Caco-2 (cell line): ENCODE measurements at regions of chr2 and their contacts with region 1.

Region 1: DNA sequence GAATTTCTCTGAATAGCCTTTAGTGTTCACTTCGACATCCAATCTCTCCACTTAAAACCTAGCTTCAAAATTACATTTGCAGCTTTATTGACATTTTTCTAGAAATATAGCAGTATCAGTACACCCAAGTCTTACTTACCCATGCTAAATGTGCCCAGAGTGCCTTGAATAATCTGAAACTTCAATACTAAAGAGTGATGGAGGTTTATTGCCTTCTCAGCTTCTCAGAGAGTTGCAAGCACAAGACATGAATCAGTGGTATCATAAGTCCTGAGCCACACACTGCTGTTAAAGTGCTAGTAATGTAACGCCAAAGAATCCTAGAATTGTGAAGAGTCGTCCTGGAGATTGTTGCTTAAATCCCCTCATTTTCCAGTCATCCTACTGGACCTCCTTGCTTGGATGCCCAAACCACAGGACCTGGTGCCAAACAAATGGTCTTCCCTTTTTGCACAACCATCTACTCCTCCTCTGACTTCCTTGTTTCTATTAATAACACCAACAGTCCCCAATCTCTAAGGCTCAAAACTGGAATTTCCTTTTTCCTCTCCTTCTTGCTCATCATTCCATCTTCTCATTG is 83.2 kb upstream of the SPATS2L start:
- DNase-seq: no peak
- H3K4me3 ChIP-seq: no peak overlapping the region
- H3K4me3 Mint-ChIP-seq: no peak overlapping the region
- H3K27ac Mint-ChIP-seq: peak overlapping the region; percentile 17
- H3K4me1 ChIP-seq: peaks cover 50% of the 10 kb centered on the region
- H3K4me1 Mint-ChIP-seq: peaks cover 49% of the 10 kb centered on the region
- H3K27me3 ChIP-seq: no peaks in the 10 kb centered on the region
- H3K27me3 Mint-ChIP-seq: no peaks in the 10 kb centered on the region
- CTCF ChIP-seq: no peak

Region 2: DNA sequence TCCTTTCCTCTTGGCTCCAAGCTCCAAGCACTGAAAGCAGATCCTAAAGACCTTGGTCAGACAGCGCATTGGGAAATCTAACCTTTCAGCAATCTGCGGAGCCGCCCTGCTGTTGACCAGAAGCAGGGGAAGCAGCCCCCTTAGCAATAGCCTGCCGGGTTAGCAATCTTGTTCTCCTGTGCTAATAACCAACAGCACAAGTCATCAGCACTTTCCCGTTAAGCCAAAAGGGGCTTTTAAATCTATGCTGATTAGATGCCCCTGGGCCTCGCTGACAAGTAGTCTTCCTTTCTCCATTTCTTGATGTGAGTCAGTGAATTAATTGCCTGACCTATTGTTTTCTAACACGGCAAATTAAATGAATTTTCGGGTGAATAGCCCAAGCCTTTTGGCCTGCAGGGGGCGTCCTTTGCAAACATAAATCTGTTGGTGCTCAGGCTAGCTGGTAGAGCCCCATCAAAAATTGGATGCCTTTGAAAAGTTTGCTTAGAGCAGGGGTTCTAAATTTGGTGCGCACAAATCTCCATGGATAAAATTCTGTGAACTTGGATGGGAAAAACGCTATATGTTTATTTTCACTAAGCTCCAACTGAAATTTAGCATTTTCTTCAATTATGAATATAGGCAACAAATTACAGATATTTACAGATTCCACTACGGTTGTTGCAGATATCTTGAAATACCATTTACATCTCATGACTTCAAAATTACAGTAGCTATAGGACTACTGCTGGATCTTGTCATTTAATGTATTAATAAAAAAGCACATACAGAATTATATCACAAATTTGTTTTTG is 243.3 kb before region 1 on chr2:
- CTCF ChIA-PET with region 1: no interaction called
- POLR2A ChIA-PET with region 1: no interaction called
- intact Hi-C with region 1: loop called (anchors 2 kb)
- DNase-seq: peak; percentile 76 to 83
- H3K4me3 ChIP-seq: no peak overlapping the region
- H3K4me3 Mint-ChIP-seq: peak overlapping the region; percentile 9
- H3K27ac Mint-ChIP-seq: no peak overlapping the region
- H3K4me1 ChIP-seq: peaks cover 20% of the 10 kb centered on the region
- H3K4me1 Mint-ChIP-seq: peaks cover 20% of the 10 kb centered on the region
- H3K27me3 ChIP-seq: no peaks in the 10 kb centered on the region
- H3K27me3 Mint-ChIP-seq: no peaks in the 10 kb centered on the region
- CTCF ChIP-seq: peak; percentile 74 to 87

Region 3: GRCh38 chr2:200148366-200148765 is 74.9 kb before region 1 on chr2:
- CTCF ChIA-PET with region 1: no interaction called
- POLR2A ChIA-PET with region 1: no interaction called
- intact Hi-C with region 1: no loop called
- DNase-seq: no peak
- H3K4me3 ChIP-seq: no peak overlapping the region
- H3K4me3 Mint-ChIP-seq: no peak overlapping the region
- H3K27ac Mint-ChIP-seq: no peak overlapping the region
- H3K4me1 ChIP-seq: peaks cover 14% of the 10 kb centered on the region
- H3K4me1 Mint-ChIP-seq: peaks cover 7% of the 10 kb centered on the region
- H3K27me3 ChIP-seq: no peaks in the 10 kb centered on the region
- H3K27me3 Mint-ChIP-seq: no peaks in the 10 kb centered on the region
- CTCF ChIP-seq: no peak

Region 4: DNA sequence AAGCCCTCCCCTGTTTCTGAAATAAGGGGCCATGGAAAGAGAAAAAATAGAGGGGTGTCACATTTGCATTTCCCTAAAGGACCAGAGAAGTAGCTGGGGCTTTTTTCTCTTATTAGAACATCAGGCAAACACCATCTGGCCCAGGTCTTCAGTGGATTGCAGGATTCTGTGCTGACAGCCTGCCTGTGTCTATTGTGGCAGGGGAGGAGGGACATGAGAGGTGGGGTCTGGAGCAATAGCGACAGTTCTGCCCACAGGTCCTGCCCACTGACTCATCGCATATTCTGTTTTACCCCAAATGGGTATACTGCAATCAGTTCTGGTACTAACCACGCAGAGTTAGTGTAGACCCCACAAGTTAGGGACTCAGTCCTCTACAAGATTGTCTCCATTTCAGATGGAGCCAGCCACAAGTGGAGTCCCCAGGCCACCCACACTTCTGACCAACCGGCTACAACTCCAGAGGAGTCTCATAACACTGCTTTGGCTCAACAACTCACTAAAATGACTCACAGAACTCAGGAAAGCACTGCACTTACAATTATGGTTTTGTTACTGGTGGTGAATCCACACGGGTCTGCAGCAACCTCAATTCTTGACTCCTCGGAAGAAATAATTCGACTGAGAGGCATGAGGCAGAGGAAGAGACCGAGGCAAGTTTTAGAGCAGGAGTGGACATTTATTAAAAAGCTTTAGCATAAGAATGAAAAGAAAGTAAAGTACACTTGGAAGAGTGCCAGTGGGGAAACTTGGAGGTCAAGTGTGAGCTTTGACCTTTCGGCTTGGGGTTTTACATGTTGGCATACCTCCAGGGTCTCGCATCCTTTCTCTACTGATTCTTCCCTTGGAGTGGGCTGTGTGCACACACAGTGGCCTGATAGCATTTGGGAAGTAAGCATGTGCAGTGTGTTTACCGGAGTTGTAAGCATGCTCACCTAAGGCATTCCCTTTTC is 63.2 kb before region 1 on chr2:
- CTCF ChIA-PET with region 1: interaction called, 3 read pairs
- POLR2A ChIA-PET with region 1: no interaction called
- intact Hi-C with region 1: loop called (anchors 1 kb)
- DNase-seq: no peak
- H3K4me3 ChIP-seq: no peak overlapping the region
- H3K4me3 Mint-ChIP-seq: no peak overlapping the region
- H3K27ac Mint-ChIP-seq: no peak overlapping the region
- H3K4me1 ChIP-seq: peaks cover 24% of the 10 kb centered on the region; the same call in 1 of the 2 replicates
- H3K4me1 Mint-ChIP-seq: peaks cover 20% of the 10 kb centered on the region
- H3K27me3 ChIP-seq: no peaks in the 10 kb centered on the region
- H3K27me3 Mint-ChIP-seq: no peaks in the 10 kb centered on the region
- CTCF ChIP-seq: no peak

Region 5: GRCh38 chr2:200239216-200239615 is 15.9 kb after region 1 on chr2:
- CTCF ChIA-PET with region 1: no interaction called
- POLR2A ChIA-PET with region 1: no interaction called
- intact Hi-C with region 1: no loop called
- DNase-seq: no peak
- H3K4me3 ChIP-seq: no peak overlapping the region
- H3K4me3 Mint-ChIP-seq: no peak overlapping the region
- H3K27ac Mint-ChIP-seq: no peak overlapping the region
- H3K4me1 ChIP-seq: no peaks in the 10 kb centered on the region
- H3K4me1 Mint-ChIP-seq: no peaks in the 10 kb centered on the region
- H3K27me3 ChIP-seq: no peaks in the 10 kb centered on the region
- H3K27me3 Mint-ChIP-seq: no peaks in the 10 kb centered on the region
- CTCF ChIP-seq: no peak

Region 6: DNA sequence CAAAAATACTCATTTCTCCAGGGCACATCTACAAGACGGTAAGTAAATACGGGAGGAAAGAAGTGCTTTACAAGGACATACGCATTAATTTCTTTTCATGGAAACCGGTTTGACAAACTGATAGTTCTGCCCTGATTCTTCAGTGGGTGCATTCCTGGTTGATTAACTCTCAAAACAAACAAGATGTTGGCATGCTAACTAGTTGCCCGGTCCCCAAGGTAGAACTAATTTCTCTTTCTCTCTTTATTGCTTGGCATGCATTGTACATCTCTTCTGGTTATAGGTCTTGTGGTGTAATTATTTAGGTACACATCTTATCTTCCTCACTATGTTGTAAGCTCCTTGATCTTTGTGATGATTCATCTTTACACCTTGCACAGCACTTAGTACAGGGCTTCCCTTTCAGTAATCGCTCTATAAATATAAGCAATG is 36.3 kb after region 1 on chr2:
- CTCF ChIA-PET with region 1: no interaction called
- POLR2A ChIA-PET with region 1: no interaction called
- intact Hi-C with region 1: loop called (anchors 1 kb)
- DNase-seq: peak in 1 of 2 experiments; percentile 67
- H3K4me3 ChIP-seq: no peak overlapping the region
- H3K4me3 Mint-ChIP-seq: peak overlapping the region; percentile 49
- H3K27ac Mint-ChIP-seq: peak overlapping the region; percentile 17
- H3K4me1 ChIP-seq: peaks cover 39% of the 10 kb centered on the region
- H3K4me1 Mint-ChIP-seq: peaks cover 24% of the 10 kb centered on the region
- H3K27me3 ChIP-seq: no peaks in the 10 kb centered on the region
- H3K27me3 Mint-ChIP-seq: no peaks in the 10 kb centered on the region
- CTCF ChIP-seq: no peak

Region 7: GRCh38 chr2:200306196-200306930 is 83.1 kb after region 1 on chr2 and contains the start of gene SPATS2L:
- CTCF ChIA-PET with region 1: no interaction called
- POLR2A ChIA-PET with region 1: interaction called, 10 read pairs
- intact Hi-C with region 1: loop called (anchors 1 kb)
- DNase-seq: peak; percentile 90 to 94
- H3K4me3 ChIP-seq: peak within 1 kb of the TSS; percentile 88
- H3K4me3 Mint-ChIP-seq: peak within 1 kb of the TSS; percentile 89
- H3K27ac Mint-ChIP-seq: peak within 1 kb of the TSS; percentile 97
- H3K4me1 ChIP-seq: peaks cover 69% of the 10 kb centered on the region
- H3K4me1 Mint-ChIP-seq: peaks cover 40% of the 10 kb centered on the region
- H3K27me3 ChIP-seq: no peaks in the 10 kb centered on the region
- H3K27me3 Mint-ChIP-seq: no peaks in the 10 kb centered on the region
- CTCF ChIP-seq: no peak
- total RNA-seq, gene SPATS2L: 189 and 196 TPM in 2 replicates

Region 8: DNA sequence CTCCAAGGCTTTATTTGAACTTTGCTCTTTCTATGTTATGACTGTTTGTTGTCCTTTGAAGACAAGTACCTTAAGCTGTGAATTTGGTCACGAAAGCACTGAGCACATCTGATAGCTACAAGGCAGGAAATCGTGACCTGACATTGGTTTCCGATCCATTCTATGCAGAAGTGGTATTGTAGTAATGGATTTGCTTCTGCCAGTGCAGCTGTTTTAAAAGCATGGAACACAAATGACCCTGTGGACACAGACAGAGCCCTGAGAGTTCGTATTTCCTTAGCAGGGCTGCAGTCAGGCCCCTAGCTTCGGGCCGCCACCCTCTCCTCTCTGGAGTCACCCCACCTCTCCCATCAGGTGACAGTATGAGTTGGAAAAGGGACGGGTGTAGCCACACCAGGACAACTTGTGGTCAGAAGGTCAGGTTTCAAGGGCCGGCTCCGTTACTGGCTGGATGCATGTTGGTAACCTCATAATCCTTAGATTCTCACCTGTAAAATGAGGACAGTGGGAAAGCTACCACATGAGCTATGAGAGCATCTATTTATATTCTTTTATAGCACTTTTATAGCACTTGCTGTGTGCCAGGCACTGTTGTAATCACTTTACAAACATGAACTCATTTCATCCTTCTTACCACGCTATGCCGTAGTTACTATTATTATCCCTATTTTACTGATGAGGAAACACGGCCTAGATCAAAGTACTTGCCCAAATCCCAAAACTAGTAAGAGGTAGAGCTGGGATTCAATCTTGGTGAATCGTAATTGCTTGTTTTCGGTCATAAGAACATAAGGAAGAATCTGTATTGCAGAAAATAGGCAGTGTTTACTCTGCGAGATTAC is 153.4 kb after region 1 on chr2:
- CTCF ChIA-PET with region 1: no interaction called
- POLR2A ChIA-PET with region 1: no interaction called
- intact Hi-C with region 1: loop called (anchors 1 kb)
- DNase-seq: peak in 1 of 2 experiments; percentile 57
- H3K4me3 ChIP-seq: no peak overlapping the region
- H3K4me3 Mint-ChIP-seq: peak overlapping the region; percentile 65
- H3K27ac Mint-ChIP-seq: peak overlapping the region; percentile 90
- H3K4me1 ChIP-seq: peaks cover 91% of the 10 kb centered on the region
- H3K4me1 Mint-ChIP-seq: peaks cover 74% of the 10 kb centered on the region
- H3K27me3 ChIP-seq: no peaks in the 10 kb centered on the region
- H3K27me3 Mint-ChIP-seq: no peaks in the 10 kb centered on the region
- CTCF ChIP-seq: no peak

Region 9: DNA sequence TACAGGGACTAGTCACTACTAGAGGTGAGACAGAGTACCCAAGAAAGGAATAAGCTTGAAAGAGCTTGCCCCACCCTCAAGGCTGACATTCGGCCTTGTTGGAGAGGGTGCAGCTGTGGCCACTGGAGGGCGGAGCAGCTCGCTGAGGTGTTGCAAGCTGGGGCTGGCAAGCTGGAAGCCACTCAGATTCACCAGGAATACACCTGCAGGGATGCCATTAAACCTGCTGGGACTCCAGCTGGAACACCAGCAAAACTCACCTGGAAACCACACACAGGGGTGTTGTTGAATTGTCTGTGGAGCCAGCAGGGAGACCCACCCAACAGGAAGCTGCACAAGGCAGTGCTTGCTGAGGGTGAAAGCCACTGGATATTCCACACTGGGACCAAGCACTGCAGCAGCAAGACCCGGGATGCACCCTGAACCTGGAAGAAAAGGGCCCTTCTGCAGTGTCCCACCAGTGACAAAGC is 260.5 kb after region 1 on chr2:
- CTCF ChIA-PET with region 1: no interaction called
- POLR2A ChIA-PET with region 1: no interaction called
- intact Hi-C with region 1: loop called (anchors 5 kb)
- DNase-seq: peak; percentile 76 to 78
- H3K4me3 ChIP-seq: no peak overlapping the region
- H3K4me3 Mint-ChIP-seq: no peak overlapping the region
- H3K27ac Mint-ChIP-seq: no peak overlapping the region
- H3K4me1 ChIP-seq: peaks cover 26% of the 10 kb centered on the region
- H3K4me1 Mint-ChIP-seq: peaks cover 27% of the 10 kb centered on the region
- H3K27me3 ChIP-seq: no peaks in the 10 kb centered on the region
- H3K27me3 Mint-ChIP-seq: no peaks in the 10 kb centered on the region
- CTCF ChIP-seq: peak; percentile 52 to 85